Colonic mucosa (tissue), 4 donors: ENCODE measurements at regions of chr1 and their contacts with region 1.

Region 1: GRCh38 chr1:205335643-205336091 is 14.1 kb upstream of the NUAK2 start:
- DNase-seq: peak; percentile 90
- H3K4me3 ChIP-seq: no peak overlapping the region
- H3K27ac ChIP-seq: no peak overlapping the region
- H3K4me1 ChIP-seq: no peaks in the 10 kb centered on the region
- H3K27me3 ChIP-seq: no peaks in the 10 kb centered on the region
- CTCF ChIP-seq: peak; percentile 91

Region 2: GRCh38 chr1:205480349-205480985 is 144.8 kb after region 1 on chr1:
- intact Hi-C with region 1: loop called (anchors 5 kb)
- DNase-seq: no peak
- H3K4me3 ChIP-seq: no peak overlapping the region
- H3K27ac ChIP-seq: no peak overlapping the region
- H3K4me1 ChIP-seq: no peaks in the 10 kb centered on the region
- H3K27me3 ChIP-seq: no peaks in the 10 kb centered on the region
- CTCF ChIP-seq: no peak